CD14-positive monocyte (primary cell): ENCODE measurements at regions of chr16 and their contacts with region 1.

Region 1: GRCh38 chr16:66552286-66553177 is at the start of gene CKLF:
- DNase-seq: peak; percentile 86 to 91 (median 91)
- H3K4me3 ChIP-seq: peak within 1 kb of the TSS; percentile 57 to 90 (median 71)
- H3K4me3 Mint-ChIP-seq: peak within 1 kb of the TSS; percentile 95 to 100
- H3K27ac ChIP-seq: peak within 1 kb of the TSS; percentile 84 to 86
- H3K27ac Mint-ChIP-seq: peak within 1 kb of the TSS; percentile 80 to 97 (median 93)
- H3K4me1 ChIP-seq: peaks cover 74 to 94% of the 10 kb centered on the region in 2 donors
- H3K4me1 Mint-ChIP-seq: peaks cover 79% of the 10 kb centered on the region
- H3K27me3 ChIP-seq: no peaks in the 10 kb centered on the region
- H3K27me3 Mint-ChIP-seq: no peaks in the 10 kb centered on the region
- CTCF ChIP-seq: no peak
- polyA plus RNA-seq, gene CKLF: 285 to 430 (median 374) TPM

Region 2: DNA sequence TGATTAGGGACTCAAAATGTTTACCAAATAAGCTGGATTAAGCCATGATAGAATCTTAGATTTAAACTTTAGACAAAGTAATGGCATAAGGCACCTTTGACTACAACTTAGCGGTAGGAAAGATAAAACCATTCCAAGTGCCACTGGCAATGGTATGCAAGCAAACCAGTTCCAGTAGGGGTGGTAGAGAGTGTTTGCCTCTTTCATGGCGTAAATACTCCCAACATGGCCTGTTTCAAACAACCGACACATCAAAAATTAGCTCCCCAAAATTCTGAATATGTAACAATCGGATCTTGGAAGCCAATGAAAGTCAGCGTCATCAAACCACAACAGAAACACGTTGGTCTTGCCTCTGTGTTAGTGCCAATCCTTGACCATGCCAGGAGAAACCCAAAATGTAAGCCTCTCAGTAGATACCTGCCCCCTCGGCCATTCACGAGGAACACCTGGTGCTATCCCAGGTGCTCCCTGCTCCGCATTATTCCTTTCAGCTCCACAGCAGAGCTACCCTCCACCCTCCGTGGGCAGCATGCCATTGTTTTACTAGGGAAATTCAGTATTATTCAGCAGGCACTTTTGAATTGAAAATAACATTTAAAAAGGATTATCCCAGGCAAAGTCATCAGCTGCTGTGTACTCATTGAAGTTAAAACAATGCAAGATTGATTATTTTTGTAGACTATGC is 1122.9 kb before region 1 on chr16:
- intact Hi-C with region 1: no loop called
- DNase-seq: no peak
- H3K4me3 ChIP-seq: no peak overlapping the region
- H3K4me3 Mint-ChIP-seq: no peak overlapping the region
- H3K27ac ChIP-seq: no peak overlapping the region
- H3K27ac Mint-ChIP-seq: no peak overlapping the region
- H3K4me1 ChIP-seq: no peaks in the 10 kb centered on the region
- H3K4me1 Mint-ChIP-seq: no peaks in the 10 kb centered on the region
- H3K27me3 ChIP-seq: no peaks in the 10 kb centered on the region
- H3K27me3 Mint-ChIP-seq: peaks cover 0 to 3% (median 0%) of the 10 kb centered on the region in 3 donors
- CTCF ChIP-seq: no peak

Region 3: GRCh38 chr16:66483689-66484481 is 68.6 kb before region 1 on chr16:
- intact Hi-C with region 1: loop called (anchors 5 to 10 kb)
- DNase-seq: peak; percentile 69 to 79 (median 77)
- H3K4me3 ChIP-seq: no peak overlapping the region
- H3K4me3 Mint-ChIP-seq: no peak overlapping the region
- H3K27ac ChIP-seq: no peak overlapping the region
- H3K27ac Mint-ChIP-seq: peak overlapping the region in 3 of 7 donors; percentile 33 to 57 (median 54)
- H3K4me1 ChIP-seq: peaks cover 58 to 69% of the 10 kb centered on the region in 2 donors
- H3K4me1 Mint-ChIP-seq: peaks cover 63% of the 10 kb centered on the region
- H3K27me3 ChIP-seq: no peaks in the 10 kb centered on the region
- H3K27me3 Mint-ChIP-seq: peaks cover 2 to 4% (median 3%) of the 10 kb centered on the region in 3 donors
- CTCF ChIP-seq: peak; percentile 94

Region 4: DNA sequence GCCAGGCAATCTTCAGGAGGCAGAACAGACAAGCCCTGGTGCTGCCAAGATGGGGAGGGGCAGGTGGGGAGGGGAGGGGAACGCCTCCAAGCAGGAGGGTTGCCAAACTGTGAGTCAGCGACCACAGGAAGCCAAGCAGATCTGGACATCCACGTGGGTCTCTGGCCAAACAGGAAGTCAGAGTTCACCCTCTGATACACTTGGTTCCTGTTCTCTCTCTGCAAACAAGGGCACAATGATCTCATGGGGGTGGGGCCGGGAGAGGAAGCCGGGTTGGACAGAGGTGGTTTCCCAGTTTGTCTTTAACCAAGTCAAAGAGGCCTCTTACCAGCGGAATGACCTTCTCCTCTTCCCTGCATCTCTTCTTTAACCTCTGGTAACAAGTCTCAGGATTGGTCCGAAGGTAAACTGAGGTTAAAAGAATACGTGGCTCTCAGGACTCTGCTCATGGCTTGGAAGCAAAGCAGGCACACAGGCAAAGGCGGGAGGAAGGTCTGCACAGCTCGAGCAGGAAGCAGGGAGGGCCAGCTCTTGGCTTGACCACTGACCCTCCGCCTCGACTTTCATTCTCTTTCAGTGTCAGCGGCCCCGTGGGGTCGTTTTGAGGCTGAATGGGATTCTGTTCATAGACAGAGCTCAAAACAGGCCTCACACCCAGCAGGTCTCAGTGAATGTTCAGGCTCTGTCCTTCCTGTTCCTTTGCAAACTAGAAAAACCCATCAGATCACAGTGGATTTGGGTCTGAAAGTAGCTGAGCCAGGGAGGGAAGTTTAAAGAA is 35.5 kb before region 1 on chr16:
- intact Hi-C with region 1: loop called (anchors 2 to 5 kb)
- DNase-seq: peak; percentile 99 to 100 (median 99)
- H3K4me3 ChIP-seq: peak overlapping the region; percentile 24 to 68 (median 41)
- H3K4me3 Mint-ChIP-seq: peak overlapping the region; percentile 81 to 93
- H3K27ac ChIP-seq: peak overlapping the region; percentile 99
- H3K27ac Mint-ChIP-seq: peak overlapping the region; percentile 99 to 100 (median 100)
- H3K4me1 ChIP-seq: peaks cover 88 to 91% of the 10 kb centered on the region in 2 donors
- H3K4me1 Mint-ChIP-seq: peaks cover 92% of the 10 kb centered on the region
- H3K27me3 ChIP-seq: no peaks in the 10 kb centered on the region
- H3K27me3 Mint-ChIP-seq: peaks cover 0 to 2% (median 0%) of the 10 kb centered on the region in 3 donors
- CTCF ChIP-seq: no peak

Region 5: DNA sequence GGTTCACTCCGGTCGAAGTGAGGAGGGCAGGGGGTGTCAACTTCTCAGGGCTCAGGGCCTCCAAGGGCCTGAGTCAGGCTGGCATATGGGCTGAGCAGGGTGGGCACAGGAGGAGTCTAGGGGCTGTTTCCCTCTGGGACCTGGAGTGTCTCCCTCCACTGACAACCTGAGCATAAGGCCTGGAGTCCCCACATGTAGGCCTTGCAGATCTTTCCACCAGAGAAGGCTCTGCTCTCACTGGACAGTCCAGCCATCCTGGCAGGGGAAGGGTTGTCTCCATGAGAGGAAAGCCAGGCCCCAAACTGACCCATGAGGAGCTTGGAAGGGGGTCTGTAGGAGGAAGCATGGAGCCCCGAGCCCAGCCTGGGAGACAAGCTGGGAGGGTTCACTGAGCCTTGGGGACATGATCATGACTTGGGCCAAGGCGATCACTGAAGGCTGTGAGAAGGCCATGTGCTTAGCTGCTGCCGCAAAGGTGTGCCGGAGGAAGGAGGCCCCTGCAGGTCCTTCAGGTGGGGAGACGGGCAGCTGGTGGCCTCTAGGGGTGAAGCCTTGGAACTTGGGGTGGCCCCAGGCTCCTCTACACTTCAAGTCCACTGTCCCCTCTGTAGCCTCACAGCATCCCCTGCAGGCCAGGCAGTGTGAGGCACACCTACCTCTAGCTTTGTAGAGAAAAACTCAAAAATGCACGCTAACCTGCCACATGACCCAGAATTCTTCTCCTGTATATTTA is 36.6 kb after region 1 on chr16:
- intact Hi-C with region 1: loop called (anchors 5 kb)
- DNase-seq: peak; percentile 68 to 83 (median 77)
- H3K4me3 ChIP-seq: no peak overlapping the region
- H3K4me3 Mint-ChIP-seq: peak overlapping the region in 1 of 2 donors; percentile 61
- H3K27ac ChIP-seq: peak overlapping the region in 1 of 2 donors; percentile 40
- H3K27ac Mint-ChIP-seq: peak overlapping the region in 3 of 7 donors; percentile 44 to 64 (median 46)
- H3K4me1 ChIP-seq: peaks cover 67 to 73% of the 10 kb centered on the region in 2 donors
- H3K4me1 Mint-ChIP-seq: peaks cover 68% of the 10 kb centered on the region
- H3K27me3 ChIP-seq: no peaks in the 10 kb centered on the region
- H3K27me3 Mint-ChIP-seq: peaks cover 0 to 6% (median 3%) of the 10 kb centered on the region in 3 donors
- CTCF ChIP-seq: peak; percentile 97